ENCODE measurements at regions of chr16 and their contacts with region 1.

Region 1: GRCh38 chr16:53541326-53541725 is 38.3 kb upstream of the AKTIP start:
- DNase-seq: no peak
- ATAC-seq: no peak
- H3K4me3 ChIP-seq: no peak overlapping the region
- H3K27ac ChIP-seq: no peak overlapping the region
- H3K4me1 ChIP-seq: peaks cover 32% of the 10 kb centered on the region
- H3K27me3 ChIP-seq: no peaks in the 10 kb centered on the region
- CTCF ChIP-seq: no peak
- EP300 ChIP-seq: no peak
- POLR2A ChIP-seq: no peak
- RAD21 ChIP-seq: no peak

Region 2: DNA sequence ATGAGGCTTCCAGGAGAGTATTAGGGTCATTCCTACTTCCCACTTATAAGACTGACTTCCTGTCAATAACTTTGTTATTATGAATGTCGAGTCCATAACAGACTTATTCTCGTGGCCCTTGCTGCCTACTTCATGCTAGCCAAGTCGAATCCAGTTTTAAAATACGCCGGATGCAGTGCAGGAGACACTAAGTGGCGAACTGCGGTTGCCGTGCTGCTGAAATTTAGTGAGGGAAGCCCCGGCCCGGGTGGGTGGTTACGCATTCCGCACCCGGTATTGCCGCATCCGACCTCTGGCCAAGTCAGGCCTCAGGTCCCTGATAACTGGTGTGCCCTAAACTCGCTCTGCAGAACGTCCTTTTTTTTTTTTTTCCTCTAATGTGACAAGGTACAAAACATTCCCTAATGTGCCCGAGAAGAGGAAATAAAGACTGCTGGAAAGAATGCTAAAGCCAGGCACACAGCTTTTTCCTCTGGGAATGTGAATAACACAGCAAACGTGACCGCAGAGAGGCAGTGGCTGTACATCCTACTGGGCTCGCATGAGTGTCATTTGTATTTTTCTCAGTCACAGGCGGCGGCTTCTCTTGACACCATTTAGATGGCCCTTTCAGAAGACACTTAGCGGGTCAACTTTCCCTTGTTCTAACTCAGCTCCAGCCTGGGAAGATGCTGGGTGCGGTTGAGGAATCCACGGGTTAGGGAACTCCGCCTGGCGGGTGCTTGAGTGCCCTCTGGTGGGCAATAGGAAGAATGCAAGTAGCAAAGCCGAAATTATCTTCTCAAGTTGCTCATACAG is 31.2 kb before region 1 on chr16:
- CTCF ChIA-PET with region 1: interaction called, 22 read pairs
- POLR2A ChIA-PET with region 1: interaction called, 10 read pairs
- in situ Hi-C with region 1: no loop called
- intact Hi-C with region 1: no loop called
- DNase-seq: peak; percentile 67
- ATAC-seq: peak; percentile 70
- H3K4me3 ChIP-seq: peak overlapping the region; percentile 42 to 70 (median 50)
- H3K27ac ChIP-seq: peak overlapping the region; percentile 36
- H3K4me1 ChIP-seq: peaks cover 50% of the 10 kb centered on the region
- H3K27me3 ChIP-seq: no peaks in the 10 kb centered on the region
- CTCF ChIP-seq: peak; percentile 88
- EP300 ChIP-seq: peak in 1 of 2 experiments; percentile 31; a peak in 1 of 4 replicates
- POLR2A ChIP-seq: peak in 1 of 2 experiments; percentile 30; a peak in 1 of 4 replicates
- RAD21 ChIP-seq: peak; percentile 70

Measured in HepG2 (cell line).